ENCODE measurements at regions of chr11 and their contacts with region 1.

Region 1: DNA sequence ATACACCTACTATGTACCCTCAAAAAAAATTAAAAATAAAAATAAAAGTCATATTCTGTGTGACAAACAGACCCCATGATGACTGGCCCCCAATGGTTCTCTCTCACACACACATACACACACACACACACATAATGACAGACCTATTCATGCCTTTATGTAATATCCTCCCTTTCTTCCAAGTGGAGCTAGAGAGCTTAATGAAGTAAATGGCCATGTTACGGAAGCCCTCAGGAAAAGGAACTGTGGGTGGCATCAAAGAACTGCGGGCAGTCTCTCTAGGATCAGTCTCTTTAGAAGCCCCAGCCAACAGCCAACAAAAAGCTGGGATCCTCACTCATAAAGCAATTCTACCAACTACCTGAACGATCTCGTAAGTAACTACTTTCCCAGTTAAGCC is 125.5 kb downstream of the SIK3 start:
- DNase-seq: peak; percentile 70 to 87 (median 77)
- H3K4me3 ChIP-seq: no peak overlapping the region
- H3K27ac ChIP-seq: peak overlapping the region; percentile 22 to 35
- H3K4me1 ChIP-seq: peaks cover 0 to 19% (median 3%) of the 10 kb centered on the region in 4 experiments
- H3K27me3 ChIP-seq: no peaks in the 10 kb centered on the region

Region 2: GRCh38 chr11:116703421-116703820 is 269.3 kb before region 1 on chr11:
- CTCF ChIA-PET with region 1: no interaction called
- POLR2A ChIA-PET with region 1: no interaction called
- DNase-seq: peak; percentile 6 to 52 (median 50)
- H3K4me3 ChIP-seq: no peak overlapping the region
- H3K27ac ChIP-seq: no peak overlapping the region
- H3K4me1 ChIP-seq: peaks cover 0 to 3% (median 0%) of the 10 kb centered on the region in 4 experiments
- H3K27me3 ChIP-seq: peaks cover under 1 to 24% (median 11%) of the 10 kb centered on the region in 5 experiments

Region 3: DNA sequence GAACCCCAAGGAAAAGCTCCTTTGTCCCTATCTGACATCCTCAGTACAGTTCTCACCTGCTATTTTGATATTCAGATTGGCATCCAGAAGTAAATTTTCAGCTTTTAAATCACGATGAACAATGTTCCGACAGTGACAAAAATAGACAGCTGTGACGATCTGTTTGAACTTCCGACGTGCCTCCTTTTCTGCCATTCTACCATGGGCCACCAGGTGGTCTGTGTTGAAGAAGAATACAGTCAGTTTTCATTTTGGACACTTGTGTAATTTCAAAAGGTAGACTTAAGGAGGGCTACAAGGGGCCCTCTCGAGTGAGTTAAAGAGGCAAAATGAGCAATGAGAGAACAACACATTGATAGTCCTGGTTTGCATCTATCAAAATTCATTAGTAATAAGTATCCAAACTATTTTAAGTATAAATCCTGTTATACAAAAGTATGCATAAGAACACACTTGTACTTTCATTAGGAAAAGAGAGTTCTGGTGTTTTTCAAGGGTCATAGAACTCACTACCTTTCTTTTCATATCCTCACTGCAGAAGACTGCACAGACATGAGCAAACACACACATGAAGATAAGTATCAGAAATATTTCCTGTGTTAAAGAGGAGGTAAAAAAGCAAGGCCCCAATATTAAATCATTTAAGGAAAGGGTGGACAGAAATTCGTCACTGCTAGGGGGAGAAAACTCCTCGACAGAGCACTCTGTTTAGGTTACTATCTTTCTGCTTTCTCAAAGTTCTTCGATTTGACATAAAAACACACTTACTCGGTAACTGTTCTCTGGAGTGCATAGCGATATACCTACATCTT is 45.3 kb before region 1 on chr11:
- CTCF ChIA-PET with region 1: interaction called, 13 read pairs
- POLR2A ChIA-PET with region 1: interaction called, 3 read pairs
- DNase-seq: peak; percentile 62 to 82 (median 78)
- H3K4me3 ChIP-seq: peak overlapping the region in 3 of 7 experiments; percentile 1 to 42 (median 41)
- H3K27ac ChIP-seq: peak overlapping the region; percentile 10 to 97
- H3K4me1 ChIP-seq: peaks cover 51 to 69% (median 62%) of the 10 kb centered on the region in 4 experiments
- H3K27me3 ChIP-seq: no peaks in the 10 kb centered on the region

Region 4: DNA sequence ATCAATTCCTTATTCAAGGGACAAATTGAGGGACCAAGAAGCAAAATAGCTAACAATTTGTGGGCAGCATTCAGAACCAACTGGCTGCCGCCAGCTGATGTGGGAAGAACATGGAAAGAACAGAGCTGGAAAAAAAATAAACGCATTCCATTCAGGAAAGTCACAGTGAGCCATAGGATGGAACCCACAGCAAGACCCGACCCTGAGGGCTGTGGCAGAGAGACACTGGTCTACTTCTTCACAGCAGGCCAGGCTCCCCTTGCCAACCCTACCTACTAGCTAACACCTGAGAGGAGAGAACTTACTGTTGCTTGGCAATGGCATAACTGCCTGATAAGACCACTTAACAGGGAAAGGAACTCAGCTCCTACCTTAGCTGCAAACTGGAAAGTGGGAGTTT is 11.8 kb before region 1 on chr11:
- CTCF ChIA-PET with region 1: interaction called, 22 read pairs
- POLR2A ChIA-PET with region 1: interaction called, 3 read pairs
- DNase-seq: no peak
- H3K4me3 ChIP-seq: no peak overlapping the region
- H3K27ac ChIP-seq: no peak overlapping the region
- H3K4me1 ChIP-seq: peaks cover 0 to 17% (median 3%) of the 10 kb centered on the region in 4 experiments
- H3K27me3 ChIP-seq: no peaks in the 10 kb centered on the region

Region 5: GRCh38 chr11:117020287-117020686 is 47.6 kb after region 1 on chr11:
- CTCF ChIA-PET with region 1: interaction called, 15 read pairs
- POLR2A ChIA-PET with region 1: no interaction called
- DNase-seq: no peak
- H3K4me3 ChIP-seq: no peak overlapping the region
- H3K27ac ChIP-seq: no peak overlapping the region
- H3K4me1 ChIP-seq: peaks cover 2 to 34% (median 26%) of the 10 kb centered on the region in 4 experiments
- H3K27me3 ChIP-seq: no peaks in the 10 kb centered on the region